Left colon (tissue), 2 donors: ENCODE measurements at regions of chr4 and their contacts with region 1.

Region 1: DNA sequence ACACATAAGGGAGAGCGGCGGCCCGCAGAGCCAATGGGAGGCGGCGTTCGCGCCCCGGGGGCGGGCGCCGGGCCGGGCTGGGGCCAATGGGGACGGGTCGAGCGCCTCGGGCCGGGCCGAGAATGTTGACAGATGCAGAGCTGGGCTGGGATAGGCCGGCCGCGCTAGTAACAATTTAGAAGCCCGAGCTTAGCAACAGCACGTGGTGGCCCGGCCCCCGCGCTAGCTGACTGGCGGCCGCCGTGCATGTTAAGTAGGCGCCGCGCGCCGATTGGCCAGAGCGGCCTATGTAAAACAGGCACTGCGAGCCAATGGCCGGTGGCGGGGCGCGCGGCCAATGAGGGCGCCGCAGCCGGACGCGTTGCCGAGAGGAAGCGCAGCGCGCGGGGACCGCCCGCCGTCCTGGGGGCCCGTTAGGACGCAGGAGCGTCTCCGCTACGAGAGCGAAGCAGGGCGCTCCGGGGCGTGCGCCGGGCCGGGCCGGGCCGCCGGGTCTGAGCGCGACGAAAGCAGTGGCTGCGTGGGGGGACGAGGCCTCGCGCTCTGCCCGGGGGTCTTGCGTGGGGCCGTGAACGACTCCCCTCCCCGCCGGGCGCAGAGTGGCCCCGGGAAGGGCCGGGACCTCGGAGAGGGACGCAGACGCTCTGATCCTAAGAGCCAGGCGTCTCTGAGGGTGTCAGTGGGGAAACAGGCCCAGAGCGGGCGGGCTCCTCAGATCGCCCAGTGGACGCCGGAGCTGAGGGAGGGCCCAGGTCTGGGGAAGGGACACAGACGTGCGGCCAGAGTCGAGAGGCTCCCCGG is 434 bp upstream of the MXD4 start:
- DNase-seq: peak; percentile 99
- ATAC-seq: peak; percentile 89

Region 2: GRCh38 chr4:2468445-2469192 is 206.3 kb after region 1 on chr4 and contains the start of gene RNF4:
- intact Hi-C with region 1: loop called in 1 of 2 experiments (anchors 10 kb)
- DNase-seq: peak; percentile 98
- ATAC-seq: peak; percentile 89
- total RNA-seq, gene RNF4: 45.6 to 47.4 TPM